ENCODE measurements at regions of chr6 and their contacts with region 1.

Region 1: GRCh38 chr6:15090145-15090579 is 155.7 kb upstream of the JARID2 start:
- DNase-seq: peak in 1 of 2 experiments; percentile 80
- H3K4me3 ChIP-seq: peak overlapping the region; percentile 37; the same call in 1 of the 2 replicates
- H3K27ac ChIP-seq: peak overlapping the region; percentile 73
- H3K4me1 ChIP-seq: peaks cover 31% of the 10 kb centered on the region
- H3K27me3 ChIP-seq: no peaks in the 10 kb centered on the region
- CTCF ChIP-seq: no peak

Region 2: GRCh38 chr6:15101130-15101529 is 11.0 kb after region 1 on chr6:
- CTCF ChIA-PET with region 1: interaction called, 13 read pairs
- POLR2A ChIA-PET with region 1: no interaction called
- intact Hi-C with region 1: no loop called
- DNase-seq: no peak
- H3K4me3 ChIP-seq: no peak overlapping the region
- H3K27ac ChIP-seq: no peak overlapping the region
- H3K4me1 ChIP-seq: no peaks in the 10 kb centered on the region
- H3K27me3 ChIP-seq: no peaks in the 10 kb centered on the region
- CTCF ChIP-seq: no peak

Region 3: DNA sequence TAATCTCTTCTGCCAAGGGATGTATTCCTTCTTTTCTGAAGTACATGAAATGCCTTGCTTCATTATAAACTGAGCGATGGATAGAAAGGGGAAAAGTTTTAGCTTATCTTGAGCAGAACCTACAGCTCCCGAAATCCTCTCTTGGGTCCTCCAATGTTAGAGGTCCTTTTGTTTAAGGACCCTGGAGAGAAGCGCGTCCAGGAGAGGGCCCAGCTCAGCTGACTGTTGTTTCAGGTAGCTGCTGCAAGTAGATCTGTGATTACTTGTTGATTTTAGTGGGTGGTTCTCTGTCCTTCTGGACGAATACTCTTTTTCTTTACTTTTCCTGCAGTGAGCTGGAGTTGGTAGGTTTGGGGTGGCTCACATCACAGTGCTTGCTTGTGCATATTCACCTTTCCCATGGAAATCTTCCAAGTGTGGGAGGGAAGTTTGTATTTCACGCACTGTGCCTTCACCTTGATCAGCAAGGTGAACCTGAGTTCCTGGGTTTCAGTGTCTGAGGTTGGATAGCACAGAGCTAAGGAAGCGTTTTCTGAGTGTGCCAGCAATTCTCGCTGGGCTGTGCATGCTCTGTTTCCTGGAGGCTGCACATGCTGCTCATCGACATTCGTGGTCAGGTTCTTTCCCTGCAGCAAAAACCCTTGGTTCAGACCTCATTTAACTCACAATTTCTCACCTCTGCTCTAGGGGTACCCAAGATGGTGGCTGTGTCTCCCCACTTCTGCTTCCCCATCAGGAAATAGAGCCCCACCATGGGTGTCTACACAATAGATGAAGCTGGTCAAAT is 332.0 kb after region 1 on chr6:
- CTCF ChIA-PET with region 1: no interaction called
- POLR2A ChIA-PET with region 1: interaction called, 21 read pairs
- intact Hi-C with region 1: no loop called
- DNase-seq: no peak
- H3K4me3 ChIP-seq: no peak overlapping the region
- H3K27ac ChIP-seq: no peak overlapping the region
- H3K4me1 ChIP-seq: peaks cover 7% of the 10 kb centered on the region
- H3K27me3 ChIP-seq: no peaks in the 10 kb centered on the region
- CTCF ChIP-seq: no peak

Measured in PC-9 (cell line).